Activated CD8-positive, alpha-beta T cell treated with anti-CD3 and anti-CD28 coated beads, Interleukin-2, amount 10 ng/mL, durations not matched to agents 7 days and 5 days (primary cell): ENCODE measurements at regions of chr16 and their contacts with region 1.

Region 1: GRCh38 chr16:85330694-85331188 is 218.5 kb upstream of the CIBAR2 start:
- DNase-seq: peak; percentile 54
- ATAC-seq: peak; percentile 78
- H3K4me3 Mint-ChIP-seq: no peak overlapping the region
- H3K27ac Mint-ChIP-seq: no peak overlapping the region
- H3K4me1 Mint-ChIP-seq: peaks cover 22% of the 10 kb centered on the region
- H3K27me3 Mint-ChIP-seq: peaks cover 16% of the 10 kb centered on the region

Region 2: DNA sequence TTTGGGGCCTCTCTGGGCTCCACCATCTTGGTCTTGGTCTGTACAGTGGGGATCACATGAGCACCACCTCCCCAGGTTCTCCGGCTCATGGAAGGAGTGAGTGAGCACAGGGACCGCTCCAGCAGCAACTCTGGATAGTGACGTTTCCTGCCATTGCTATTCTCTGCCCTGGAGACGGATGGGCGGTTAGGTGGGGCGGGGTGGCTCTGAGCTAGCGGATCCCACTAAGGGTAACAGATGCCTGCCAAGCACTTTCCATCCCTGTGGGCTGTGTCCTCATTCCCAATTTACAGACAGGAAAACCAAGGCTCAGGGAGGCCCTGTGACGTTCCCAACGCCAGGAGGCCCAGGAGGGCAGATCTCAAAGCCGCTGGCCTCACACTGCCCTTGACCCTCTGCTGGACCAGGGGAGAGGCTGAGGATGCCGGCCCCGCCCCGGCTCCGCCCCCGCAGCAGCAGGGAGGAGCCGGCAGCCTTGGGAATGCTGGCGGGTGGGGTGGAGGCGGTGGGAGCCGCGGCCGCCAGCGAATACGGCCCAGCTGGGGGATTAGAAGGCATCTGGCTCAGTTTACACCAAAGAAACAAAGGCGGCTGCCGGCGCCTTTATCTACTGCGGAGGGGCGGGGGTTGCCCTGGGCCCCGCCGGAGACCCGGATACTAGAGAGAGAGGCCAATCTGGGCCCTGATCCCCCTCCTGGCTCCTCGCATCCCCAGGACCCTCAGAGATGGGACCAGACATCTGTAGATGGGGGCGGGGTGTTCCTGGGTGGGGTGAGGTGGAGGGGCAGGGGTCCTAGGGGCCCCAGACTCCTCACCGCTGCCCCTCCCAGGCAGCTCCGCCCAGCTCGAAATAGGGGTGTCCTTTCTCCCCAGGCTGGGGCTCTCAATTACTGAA is 96.2 kb before region 1 on chr16:
- CTCF ChIA-PET with region 1: no interaction called
- POLR2A ChIA-PET with region 1: no interaction called
- DNase-seq: no peak
- ATAC-seq: no peak
- H3K4me3 Mint-ChIP-seq: no peak overlapping the region
- H3K27ac Mint-ChIP-seq: no peak overlapping the region
- H3K4me1 Mint-ChIP-seq: peaks cover 4% of the 10 kb centered on the region
- H3K27me3 Mint-ChIP-seq: peaks cover 18% of the 10 kb centered on the region

Region 3: DNA sequence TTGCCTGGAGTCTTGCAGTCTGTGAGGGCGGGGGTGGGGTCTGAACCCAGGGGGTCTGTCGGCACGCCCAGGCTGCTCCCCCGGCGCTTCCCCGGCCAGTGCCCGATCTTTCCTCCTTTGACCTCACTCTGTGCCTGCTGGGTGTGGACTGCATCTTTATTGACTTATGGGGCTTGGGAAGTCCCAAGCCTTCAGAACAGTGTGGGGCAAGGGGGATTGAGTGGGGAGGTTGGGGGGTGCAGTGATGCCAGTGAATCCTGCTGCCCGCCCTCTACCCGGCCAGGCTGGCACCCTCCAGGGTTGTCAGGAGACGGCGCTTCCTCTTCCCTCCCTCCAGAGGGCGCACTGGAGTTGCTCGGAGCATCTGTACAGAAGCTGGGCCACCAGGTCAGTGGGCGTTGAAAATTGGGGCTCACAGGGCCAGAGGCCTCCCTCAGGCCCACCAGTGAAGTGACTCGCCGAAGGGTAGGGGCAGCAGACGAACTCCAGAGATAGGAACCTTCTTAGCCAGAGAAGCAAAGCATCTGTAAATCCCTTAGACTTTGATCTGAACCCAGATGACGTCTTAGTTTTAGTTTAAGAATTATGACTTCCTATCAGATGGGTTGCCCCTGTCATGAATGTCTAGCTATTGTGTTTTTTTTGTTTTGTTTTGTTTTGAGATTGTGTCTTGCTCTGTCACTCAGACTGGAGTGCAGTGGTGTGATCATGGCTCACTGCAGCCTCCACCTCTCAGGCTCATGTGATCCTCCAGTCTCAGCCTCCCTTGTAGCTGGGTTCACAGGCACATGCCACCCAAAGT is 33.7 kb before region 1 on chr16:
- CTCF ChIA-PET with region 1: interaction called, 13 read pairs
- POLR2A ChIA-PET with region 1: no interaction called
- DNase-seq: peak; percentile 72
- ATAC-seq: peak; percentile 89
- H3K4me3 Mint-ChIP-seq: no peak overlapping the region
- H3K27ac Mint-ChIP-seq: no peak overlapping the region
- H3K4me1 Mint-ChIP-seq: peaks cover 2% of the 10 kb centered on the region
- H3K27me3 Mint-ChIP-seq: peaks cover 2% of the 10 kb centered on the region

Region 4: DNA sequence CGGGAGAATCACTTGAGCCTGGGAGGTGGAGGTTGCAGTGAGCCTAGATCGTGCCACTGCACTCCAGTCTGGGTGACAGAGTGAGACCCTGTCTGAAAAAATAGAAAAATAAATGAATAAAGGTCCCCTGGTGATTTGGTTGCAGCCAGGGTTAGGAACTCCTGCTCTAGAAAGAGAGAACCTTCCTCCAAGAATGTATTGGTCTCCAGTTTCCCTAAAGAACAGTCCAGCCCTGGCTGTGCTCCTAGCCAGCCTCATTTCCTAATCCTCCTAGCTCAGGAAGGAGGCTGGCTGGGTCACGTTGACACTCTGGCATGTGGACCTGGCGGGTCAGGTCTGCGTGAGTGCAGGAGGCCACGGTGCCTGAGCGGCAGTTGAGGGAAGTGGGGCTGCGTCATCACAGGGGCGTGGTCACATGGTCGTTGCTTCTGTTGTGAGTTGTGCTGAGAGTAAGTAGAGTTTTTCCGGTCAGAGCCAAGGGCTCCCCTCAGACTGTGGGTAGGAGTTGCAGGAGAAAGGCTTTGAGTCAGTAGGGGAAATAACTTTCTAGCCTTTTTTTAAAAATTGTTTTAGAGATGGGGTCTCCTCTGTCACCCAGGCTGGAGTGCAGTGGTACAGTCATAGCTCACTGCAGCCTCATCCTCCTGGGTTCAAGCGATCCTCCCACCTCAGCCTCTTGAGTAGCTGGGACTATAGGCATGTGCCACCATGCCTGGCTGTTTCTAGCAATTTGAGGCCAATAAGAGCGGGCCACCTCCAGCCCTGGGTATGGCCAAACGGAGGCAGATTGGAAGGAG is 24.5 kb before region 1 on chr16:
- CTCF ChIA-PET with region 1: interaction called, 16 read pairs
- POLR2A ChIA-PET with region 1: no interaction called
- DNase-seq: peak; percentile 95
- ATAC-seq: peak; percentile 87
- H3K4me3 Mint-ChIP-seq: peak overlapping the region; percentile 50
- H3K27ac Mint-ChIP-seq: peak overlapping the region; percentile 97
- H3K4me1 Mint-ChIP-seq: peaks cover 75% of the 10 kb centered on the region
- H3K27me3 Mint-ChIP-seq: no peaks in the 10 kb centered on the region